HepG2 (cell line): ENCODE measurements at regions of chr3 and their contacts with region 1.

Region 1: DNA sequence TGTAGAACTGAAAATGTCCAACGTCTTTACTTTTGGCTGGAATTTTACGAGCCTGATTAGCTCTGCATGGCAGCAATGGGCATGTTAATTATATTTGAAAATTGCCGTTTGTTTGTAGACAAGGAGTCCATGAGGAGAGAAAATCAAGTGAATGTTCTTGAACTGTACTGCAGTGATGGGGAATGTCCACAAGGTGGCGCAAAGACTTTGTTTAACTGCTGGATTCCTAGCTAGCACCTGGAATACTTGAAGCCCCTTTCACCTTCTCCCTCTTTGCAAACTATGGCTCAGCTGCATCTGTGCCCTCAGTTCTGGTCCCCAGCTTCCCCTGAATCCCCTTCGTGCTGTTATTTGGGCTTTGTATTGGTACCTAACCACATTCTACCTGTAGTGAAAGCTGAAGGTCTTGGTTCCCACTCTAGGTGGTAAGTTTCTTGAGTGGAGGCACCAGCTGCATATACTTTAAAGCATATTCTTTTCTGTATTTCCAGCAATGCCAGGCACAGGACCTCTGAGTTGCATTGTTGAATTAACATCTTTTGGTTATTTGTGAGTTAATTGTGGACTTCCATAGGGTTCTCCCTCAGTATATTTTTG is 25.3 kb downstream of the EXOG start:
- DNase-seq: peak; percentile 56
- ATAC-seq: peak; percentile 68
- H3K4me3 ChIP-seq: no peak overlapping the region
- H3K27ac ChIP-seq: no peak overlapping the region
- H3K4me1 ChIP-seq: no peaks in the 10 kb centered on the region
- H3K27me3 ChIP-seq: no peaks in the 10 kb centered on the region
- CTCF ChIP-seq: peak; percentile 87
- EP300 ChIP-seq: no peak
- POLR2A ChIP-seq: no peak
- RAD21 ChIP-seq: peak; percentile 64

Region 2: GRCh38 chr3:38533285-38533976 is 11.9 kb after region 1 on chr3:
- CTCF ChIA-PET with region 1: no interaction called
- POLR2A ChIA-PET with region 1: no interaction called
- in situ Hi-C with region 1: no loop called
- intact Hi-C with region 1: no loop called
- DNase-seq: no peak
- ATAC-seq: no peak; the same call in 1 of the 3 replicates
- H3K4me3 ChIP-seq: no peak overlapping the region
- H3K27ac ChIP-seq: no peak overlapping the region
- H3K4me1 ChIP-seq: no peaks in the 10 kb centered on the region
- H3K27me3 ChIP-seq: no peaks in the 10 kb centered on the region
- CTCF ChIP-seq: no peak
- EP300 ChIP-seq: no peak
- POLR2A ChIP-seq: no peak
- RAD21 ChIP-seq: no peak

Region 3: GRCh38 chr3:38662544-38662943 is 141.1 kb after region 1 on chr3:
- CTCF ChIA-PET with region 1: interaction called, 15 read pairs
- POLR2A ChIA-PET with region 1: no interaction called
- in situ Hi-C with region 1: no loop called
- intact Hi-C with region 1: loop called (anchors 1 kb)
- DNase-seq: peak; percentile 52
- ATAC-seq: peak; percentile 90
- H3K4me3 ChIP-seq: no peak overlapping the region
- H3K27ac ChIP-seq: no peak overlapping the region
- H3K4me1 ChIP-seq: no peaks in the 10 kb centered on the region; the same call in 1 of the 2 replicates
- H3K27me3 ChIP-seq: peaks cover 0 to 11% of the 10 kb centered on the region in 2 experiments; a peak in 2 of 5 replicates
- CTCF ChIP-seq: peak; percentile 78
- EP300 ChIP-seq: no peak
- POLR2A ChIP-seq: no peak
- RAD21 ChIP-seq: peak; percentile 25; the same call in 1 of the 2 replicates